HepG2 (cell line): ENCODE measurements at regions of chr16 and their contacts with region 1.

Region 1: DNA sequence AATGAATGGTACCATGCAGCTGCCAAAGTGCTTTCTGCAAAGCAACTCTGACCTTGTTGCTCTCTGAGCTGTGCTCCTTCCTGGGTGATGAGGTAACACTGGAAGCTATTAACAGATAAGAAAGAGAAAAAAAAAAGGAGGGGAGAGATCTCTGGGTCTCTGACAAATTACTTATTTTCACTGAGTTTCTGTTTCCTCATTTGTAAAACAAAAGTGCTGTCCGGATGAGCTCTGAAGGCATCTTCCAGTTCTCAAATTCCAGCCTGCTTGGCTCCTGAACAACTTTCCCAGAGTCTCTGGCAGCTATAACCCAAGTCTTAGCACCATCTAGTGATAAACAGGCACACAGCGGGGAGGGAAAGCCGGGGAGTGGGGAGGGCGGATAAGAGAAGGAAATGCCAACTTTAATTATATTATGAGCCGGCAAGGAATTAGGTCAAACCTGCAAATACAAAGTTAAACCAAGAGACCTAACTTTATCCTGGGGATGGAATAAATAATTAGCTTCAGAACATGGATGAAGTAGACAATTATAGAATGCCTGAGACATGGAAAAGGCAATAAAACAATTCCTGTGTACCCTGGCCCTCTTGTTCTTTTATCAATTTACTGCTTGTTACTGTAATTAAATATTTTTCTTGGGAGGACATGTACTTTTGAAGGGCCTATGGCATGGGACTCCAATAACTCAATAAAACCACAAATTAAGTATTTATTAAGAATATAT is 61.3 kb upstream of the KIFC3 start:
- DNase-seq: peak; percentile 68
- ATAC-seq: peak; percentile 54
- H3K4me3 ChIP-seq: peak overlapping the region in 2 of 3 experiments; percentile 65 to 72; a peak in 2 of 6 replicates
- H3K27ac ChIP-seq: peak overlapping the region; percentile 54
- H3K4me1 ChIP-seq: peaks cover 86% of the 10 kb centered on the region
- H3K27me3 ChIP-seq: no peaks in the 10 kb centered on the region
- CTCF ChIP-seq: peak; percentile 83
- EP300 ChIP-seq: no peak; a peak in 2 of 4 replicates
- POLR2A ChIP-seq: no peak
- RAD21 ChIP-seq: peak; percentile 68

Region 2: GRCh38 chr16:57757326-57757786 is 106.2 kb before region 1 on chr16:
- CTCF ChIA-PET with region 1: interaction called, 8 read pairs
- POLR2A ChIA-PET with region 1: no interaction called
- in situ Hi-C with region 1: loop called (anchors 5 kb)
- intact Hi-C with region 1: loop called (anchors 1 kb)
- DNase-seq: peak; percentile 73
- ATAC-seq: peak; percentile 87
- H3K4me3 ChIP-seq: no peak overlapping the region
- H3K27ac ChIP-seq: peak overlapping the region; percentile 3
- H3K4me1 ChIP-seq: no peaks in the 10 kb centered on the region
- H3K27me3 ChIP-seq: no peaks in the 10 kb centered on the region
- CTCF ChIP-seq: peak; percentile 99
- EP300 ChIP-seq: no peak
- POLR2A ChIP-seq: no peak
- RAD21 ChIP-seq: peak; percentile 97

Region 3: DNA sequence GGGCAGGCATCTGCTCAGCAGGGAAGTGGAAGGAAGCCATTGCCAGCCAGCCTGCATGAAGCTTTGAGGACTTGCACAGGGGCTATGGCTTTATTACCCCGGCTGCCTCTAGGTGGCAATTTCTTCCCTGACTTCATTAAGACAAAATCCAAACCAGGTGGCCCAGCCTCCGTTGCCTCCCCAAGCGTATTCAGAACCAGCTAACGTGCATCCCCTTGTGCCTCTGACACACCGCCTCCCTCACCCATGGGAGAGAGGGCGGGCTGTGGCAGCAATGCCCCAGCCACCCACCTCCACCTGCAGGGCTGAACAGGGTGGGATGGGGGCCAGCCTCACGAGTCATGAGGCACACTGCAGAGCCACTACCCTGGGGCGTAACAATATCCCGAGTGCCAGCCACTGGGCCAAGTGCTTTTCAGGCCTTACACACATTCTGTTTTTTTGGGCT is 68.1 kb before region 1 on chr16:
- CTCF ChIA-PET with region 1: interaction called, 5 read pairs
- POLR2A ChIA-PET with region 1: interaction called, 12 read pairs
- in situ Hi-C with region 1: no loop called
- intact Hi-C with region 1: no loop called
- DNase-seq: peak; percentile 73
- ATAC-seq: peak; percentile 3; the same call in 1 of the 3 replicates
- H3K4me3 ChIP-seq: no peak overlapping the region; a peak in 1 of 6 replicates
- H3K27ac ChIP-seq: no peak overlapping the region
- H3K4me1 ChIP-seq: peaks cover 67% of the 10 kb centered on the region
- H3K27me3 ChIP-seq: no peaks in the 10 kb centered on the region
- CTCF ChIP-seq: peak; percentile 73
- EP300 ChIP-seq: no peak
- POLR2A ChIP-seq: no peak
- RAD21 ChIP-seq: peak; percentile 76

Region 4: DNA sequence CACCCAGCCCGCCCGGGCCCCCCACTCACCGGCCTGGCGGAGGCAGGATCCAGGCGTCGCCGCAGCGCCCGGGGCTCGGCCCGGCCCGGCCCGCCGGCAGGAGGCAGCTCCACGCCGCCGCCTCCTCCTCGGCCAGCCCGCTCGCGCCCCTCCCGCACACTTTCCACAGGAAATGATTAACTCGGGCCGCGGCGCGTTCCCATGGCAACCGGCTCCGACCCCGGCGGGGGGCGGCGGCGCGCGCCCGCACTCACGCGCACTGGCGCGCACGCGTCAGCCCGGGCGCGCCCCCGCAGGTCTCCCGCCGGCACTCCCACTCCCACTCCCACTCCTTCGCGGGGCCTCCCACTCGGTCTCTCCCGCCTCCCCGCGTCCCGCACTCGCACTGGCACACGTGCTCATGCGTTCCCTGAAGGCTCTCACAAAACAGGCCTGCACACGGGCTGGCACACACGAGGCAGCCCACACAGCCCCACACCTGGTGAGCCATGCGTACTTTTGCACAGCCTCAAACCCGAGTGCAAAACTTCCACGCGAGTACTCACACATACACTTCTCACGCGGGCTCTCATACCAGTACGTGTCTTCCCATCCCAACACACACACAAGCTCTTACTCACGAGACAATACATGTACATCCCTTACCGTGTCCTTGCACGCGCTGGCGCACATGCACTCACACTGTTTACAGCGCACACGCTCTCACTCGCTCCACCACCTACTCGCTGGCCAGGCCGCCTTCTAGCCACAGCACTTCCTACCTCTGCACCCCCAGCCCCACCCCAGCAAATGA is 61.1 kb before region 1 on chr16 and contains the start of gene KIFC3:
- CTCF ChIA-PET with region 1: interaction called, 5 read pairs
- POLR2A ChIA-PET with region 1: interaction called, 12 read pairs
- in situ Hi-C with region 1: no loop called
- intact Hi-C with region 1: loop called (anchors 2 kb)
- DNase-seq: peak; percentile 79
- ATAC-seq: peak; percentile 46
- H3K4me3 ChIP-seq: peak within 1 kb of the TSS; percentile 77 to 89 (median 82)
- H3K27ac ChIP-seq: peak within 1 kb of the TSS; percentile 73
- H3K4me1 ChIP-seq: peaks cover 83% of the 10 kb centered on the region
- H3K27me3 ChIP-seq: no peaks in the 10 kb centered on the region
- CTCF ChIP-seq: peak; percentile 50; the same call in 1 of the 2 replicates
- EP300 ChIP-seq: peak; percentile 6 to 42; a peak in 2 of 4 replicates
- POLR2A ChIP-seq: peak in 1 of 2 experiments; percentile 45; a peak in 2 of 4 replicates
- RAD21 ChIP-seq: peak; percentile 89
- total RNA-seq, gene KIFC3: 30.0 and 45.3 TPM in 2 replicates

Region 5: DNA sequence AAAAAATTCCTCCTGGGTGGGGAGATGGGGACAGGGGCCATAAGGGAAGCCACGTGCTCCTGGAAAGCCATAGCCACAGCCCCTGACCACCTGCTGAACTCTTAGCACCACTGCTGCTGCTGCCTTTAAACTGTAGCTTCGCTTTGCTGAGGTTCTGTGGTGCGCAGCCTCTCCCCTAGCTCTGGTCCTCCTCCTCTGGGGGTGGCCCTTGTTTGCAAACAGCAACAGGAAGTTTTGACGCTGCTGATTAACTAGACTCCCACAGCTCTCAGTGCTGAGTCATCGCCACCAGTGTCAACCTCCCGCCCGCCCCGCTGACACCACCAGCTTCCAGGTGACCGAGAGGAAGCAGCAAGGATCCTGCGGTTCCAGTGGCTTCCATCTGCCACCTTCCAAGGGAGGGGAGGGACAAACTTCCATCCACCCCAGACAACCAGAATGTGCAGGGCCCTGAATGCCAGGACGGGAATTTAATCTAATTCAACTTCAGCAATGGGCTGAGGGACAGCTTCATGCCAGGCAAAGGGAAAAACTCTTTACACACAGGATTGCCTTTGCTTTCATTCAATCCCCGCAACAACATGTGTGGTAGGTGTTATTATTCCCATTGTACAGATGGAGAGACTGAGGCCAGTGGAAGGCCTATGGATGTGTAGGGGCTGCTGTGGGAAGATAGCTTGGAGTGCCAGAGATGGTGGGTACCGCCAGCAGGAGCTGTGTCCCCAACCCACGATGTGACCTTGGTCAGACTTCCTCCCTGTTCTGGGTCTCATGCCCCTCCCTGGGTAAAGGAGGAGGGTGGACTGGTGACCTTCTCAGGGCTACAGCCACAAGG is 53.2 kb before region 1 on chr16:
- CTCF ChIA-PET with region 1: no interaction called
- POLR2A ChIA-PET with region 1: interaction called, 13 read pairs
- in situ Hi-C with region 1: no loop called
- intact Hi-C with region 1: no loop called
- DNase-seq: peak; percentile 92
- ATAC-seq: peak; percentile 93
- H3K4me3 ChIP-seq: peak overlapping the region in 1 of 3 experiments; percentile 41; a peak in 2 of 6 replicates
- H3K27ac ChIP-seq: peak overlapping the region; percentile 63
- H3K4me1 ChIP-seq: peaks cover 71% of the 10 kb centered on the region
- H3K27me3 ChIP-seq: no peaks in the 10 kb centered on the region
- CTCF ChIP-seq: peak; percentile 26; the same call in 1 of the 2 replicates
- EP300 ChIP-seq: peak in 1 of 2 experiments; percentile 80; a peak in 2 of 4 replicates
- POLR2A ChIP-seq: peak; percentile 40 to 85; a peak in 3 of 4 replicates
- RAD21 ChIP-seq: no peak

Region 6: GRCh38 chr16:57826706-57827625 is 36.6 kb before region 1 on chr16:
- CTCF ChIA-PET with region 1: interaction called, 3 read pairs
- POLR2A ChIA-PET with region 1: interaction called, 13 read pairs
- in situ Hi-C with region 1: no loop called
- intact Hi-C with region 1: loop called (anchors 1 kb)
- DNase-seq: peak; percentile 94
- ATAC-seq: peak; percentile 93
- H3K4me3 ChIP-seq: peak overlapping the region; percentile 34 to 59 (median 37)
- H3K27ac ChIP-seq: peak overlapping the region; percentile 90
- H3K4me1 ChIP-seq: peaks cover 80% of the 10 kb centered on the region
- H3K27me3 ChIP-seq: no peaks in the 10 kb centered on the region
- CTCF ChIP-seq: peak; percentile 39
- EP300 ChIP-seq: peak; percentile 59 to 76; a peak in 3 of 4 replicates
- POLR2A ChIP-seq: peak; percentile 55 to 79; a peak in 3 of 4 replicates
- RAD21 ChIP-seq: peak; percentile 18; the same call in 1 of the 2 replicates

Region 7: GRCh38 chr16:57837305-57838125 is 26.1 kb before region 1 on chr16:
- CTCF ChIA-PET with region 1: no interaction called
- POLR2A ChIA-PET with region 1: interaction called, 7 read pairs
- in situ Hi-C with region 1: no loop called
- intact Hi-C with region 1: loop called (anchors 2 kb)
- DNase-seq: no peak
- ATAC-seq: no peak
- H3K4me3 ChIP-seq: no peak overlapping the region
- H3K27ac ChIP-seq: no peak overlapping the region
- H3K4me1 ChIP-seq: peaks cover 50% of the 10 kb centered on the region
- H3K27me3 ChIP-seq: no peaks in the 10 kb centered on the region
- CTCF ChIP-seq: no peak
- EP300 ChIP-seq: no peak
- POLR2A ChIP-seq: no peak
- RAD21 ChIP-seq: no peak

Region 8: GRCh38 chr16:58063377-58064076 is 199.9 kb after region 1 on chr16:
- CTCF ChIA-PET with region 1: no interaction called
- POLR2A ChIA-PET with region 1: no interaction called
- in situ Hi-C with region 1: no loop called
- intact Hi-C with region 1: no loop called
- DNase-seq: no peak
- ATAC-seq: peak; percentile 79
- H3K4me3 ChIP-seq: peak overlapping the region in 1 of 3 experiments; percentile 13; a peak in 1 of 6 replicates
- H3K27ac ChIP-seq: no peak overlapping the region
- H3K4me1 ChIP-seq: peaks cover 11% of the 10 kb centered on the region
- H3K27me3 ChIP-seq: no peaks in the 10 kb centered on the region
- CTCF ChIP-seq: no peak
- EP300 ChIP-seq: no peak
- POLR2A ChIP-seq: no peak
- RAD21 ChIP-seq: no peak